ENCODE measurements at regions of chr15 and their contacts with region 1.

Region 1: DNA sequence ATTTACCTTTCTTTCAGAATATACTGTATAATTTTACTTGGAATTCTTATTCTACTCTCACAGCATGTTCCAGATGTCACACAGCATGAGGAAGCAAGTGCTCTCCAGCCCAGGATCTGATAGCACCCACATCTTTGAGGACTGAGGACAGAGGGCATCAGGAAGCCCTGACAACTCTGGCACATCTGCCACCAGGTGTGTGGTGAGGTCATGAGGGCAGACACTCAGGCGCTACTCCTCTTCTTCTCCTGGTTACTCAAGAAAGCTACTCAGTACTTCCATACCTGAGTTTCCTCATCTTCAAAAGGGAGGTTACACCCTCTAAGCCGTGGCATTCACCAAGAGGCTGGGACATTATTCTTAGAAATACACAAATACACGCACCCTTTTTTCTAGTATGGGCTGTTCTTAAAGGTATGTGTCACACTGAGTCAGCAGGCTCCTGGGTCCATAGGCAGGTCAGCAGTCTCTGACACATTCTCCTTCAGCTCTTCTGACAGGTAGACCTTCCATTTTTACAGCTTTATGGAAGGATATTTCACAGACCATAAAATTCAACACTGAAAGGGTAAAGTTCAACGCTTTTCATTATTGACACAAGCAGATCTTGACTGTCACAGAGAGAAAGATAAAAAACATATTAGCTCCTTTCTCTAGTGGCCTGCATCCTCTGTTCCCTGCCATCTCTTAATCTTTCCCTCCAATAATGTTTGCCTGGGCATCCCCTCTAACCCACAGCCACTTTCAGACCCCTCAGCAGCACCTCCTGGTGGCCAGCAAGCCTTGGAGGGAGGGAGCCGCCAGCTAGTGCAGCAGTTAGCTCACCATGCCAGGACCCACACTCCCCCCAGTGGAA is 103.2 kb upstream of the TJP1 start:
- DNase-seq: peak; percentile 44
- H3K4me3 ChIP-seq: no peak overlapping the region
- H3K27ac ChIP-seq: no peak overlapping the region
- H3K27me3 ChIP-seq: no peaks in the 10 kb centered on the region
- CTCF ChIP-seq: peak; percentile 90

Region 2: GRCh38 chr15:29728418-29728817 is 197.0 kb before region 1 on chr15:
- CTCF ChIA-PET with region 1: interaction called, 13 read pairs
- POLR2A ChIA-PET with region 1: no interaction called
- DNase-seq: no peak
- H3K4me3 ChIP-seq: no peak overlapping the region
- H3K27ac ChIP-seq: no peak overlapping the region
- H3K27me3 ChIP-seq: no peaks in the 10 kb centered on the region
- CTCF ChIP-seq: no peak

Region 3: GRCh38 chr15:29747837-29748417 is 177.5 kb before region 1 on chr15:
- CTCF ChIA-PET with region 1: interaction called, 126 read pairs
- POLR2A ChIA-PET with region 1: interaction called, 4 read pairs
- DNase-seq: no peak
- H3K4me3 ChIP-seq: no peak overlapping the region
- H3K27ac ChIP-seq: no peak overlapping the region
- H3K27me3 ChIP-seq: no peaks in the 10 kb centered on the region
- CTCF ChIP-seq: peak; percentile 46

Region 4: DNA sequence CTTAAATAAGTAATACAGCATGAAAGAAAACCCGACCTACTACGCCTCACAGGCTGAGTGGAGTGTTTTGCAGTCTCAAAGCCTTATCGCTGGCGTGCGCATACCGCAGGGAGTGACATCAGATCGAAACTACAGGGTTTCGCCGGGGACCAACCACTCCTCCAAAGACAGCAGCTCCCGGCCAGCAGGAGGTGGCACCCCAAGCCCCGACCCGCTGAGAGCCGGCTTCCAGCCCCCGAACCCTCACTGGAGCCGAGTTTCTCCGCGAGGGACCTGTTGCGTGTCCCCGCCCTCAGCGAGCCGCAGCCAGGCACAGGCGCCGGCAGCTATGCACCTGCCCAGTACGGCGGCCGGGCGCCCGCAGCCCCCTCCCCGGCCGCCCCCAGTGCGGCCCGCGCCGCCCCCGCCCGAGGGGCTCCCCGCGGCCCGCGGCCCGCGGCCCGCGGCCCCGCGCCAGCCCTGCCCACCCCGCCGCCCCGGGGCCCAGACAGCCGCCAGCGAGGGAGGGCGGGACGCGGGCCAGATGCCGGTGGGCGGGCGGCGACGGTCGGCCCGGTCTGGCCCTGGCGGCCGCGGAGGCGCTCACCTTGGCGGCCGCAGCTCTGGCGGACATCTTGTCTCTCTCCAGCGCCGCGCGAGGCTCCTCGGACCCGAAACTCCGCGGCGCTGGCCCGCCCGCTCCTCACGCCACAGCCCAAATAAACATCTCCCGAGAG is 103.9 kb before region 1 on chr15:
- CTCF ChIA-PET with region 1: interaction called, 32 read pairs
- POLR2A ChIA-PET with region 1: interaction called, 11 read pairs
- DNase-seq: peak; percentile 49
- H3K4me3 ChIP-seq: peak overlapping the region; percentile 81
- H3K27ac ChIP-seq: peak overlapping the region; percentile 85
- H3K27me3 ChIP-seq: no peaks in the 10 kb centered on the region
- CTCF ChIP-seq: peak; percentile 46

Region 5: DNA sequence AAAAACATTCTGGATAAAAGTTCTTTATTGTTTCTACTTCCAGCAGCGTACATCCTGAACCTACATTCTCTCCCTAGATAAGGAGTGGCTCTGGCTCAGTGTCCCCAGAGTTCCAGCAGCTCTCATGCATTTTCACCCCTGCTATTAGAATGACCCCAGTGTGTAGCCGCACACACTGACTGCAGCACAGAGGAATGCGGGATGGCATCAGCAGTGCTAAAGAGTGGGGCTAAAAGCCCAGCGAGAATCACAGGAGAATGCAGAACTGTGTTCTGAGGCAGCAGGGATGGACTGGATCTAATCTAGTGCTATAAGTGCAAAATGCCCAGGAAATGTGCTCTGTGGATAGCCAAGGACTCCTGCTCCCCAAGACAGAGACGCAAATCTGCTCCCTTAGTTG is 36.8 kb before region 1 on chr15:
- CTCF ChIA-PET with region 1: interaction called, 13 read pairs
- POLR2A ChIA-PET with region 1: interaction called, 9 read pairs
- DNase-seq: peak; percentile 44
- H3K4me3 ChIP-seq: no peak overlapping the region
- H3K27ac ChIP-seq: no peak overlapping the region
- H3K27me3 ChIP-seq: no peaks in the 10 kb centered on the region
- CTCF ChIP-seq: no peak

Region 6: GRCh38 chr15:29913528-29914135 is 11.8 kb before region 1 on chr15:
- CTCF ChIA-PET with region 1: interaction called, 27 read pairs
- POLR2A ChIA-PET with region 1: interaction called, 5 read pairs
- DNase-seq: no peak
- H3K4me3 ChIP-seq: no peak overlapping the region
- H3K27ac ChIP-seq: no peak overlapping the region
- H3K27me3 ChIP-seq: no peaks in the 10 kb centered on the region
- CTCF ChIP-seq: no peak

Measured in AG04450 (cell line).